Endothelial cell of umbilical vein (primary cell): ENCODE measurements at regions of chr6 and their contacts with region 1.

Region 1: DNA sequence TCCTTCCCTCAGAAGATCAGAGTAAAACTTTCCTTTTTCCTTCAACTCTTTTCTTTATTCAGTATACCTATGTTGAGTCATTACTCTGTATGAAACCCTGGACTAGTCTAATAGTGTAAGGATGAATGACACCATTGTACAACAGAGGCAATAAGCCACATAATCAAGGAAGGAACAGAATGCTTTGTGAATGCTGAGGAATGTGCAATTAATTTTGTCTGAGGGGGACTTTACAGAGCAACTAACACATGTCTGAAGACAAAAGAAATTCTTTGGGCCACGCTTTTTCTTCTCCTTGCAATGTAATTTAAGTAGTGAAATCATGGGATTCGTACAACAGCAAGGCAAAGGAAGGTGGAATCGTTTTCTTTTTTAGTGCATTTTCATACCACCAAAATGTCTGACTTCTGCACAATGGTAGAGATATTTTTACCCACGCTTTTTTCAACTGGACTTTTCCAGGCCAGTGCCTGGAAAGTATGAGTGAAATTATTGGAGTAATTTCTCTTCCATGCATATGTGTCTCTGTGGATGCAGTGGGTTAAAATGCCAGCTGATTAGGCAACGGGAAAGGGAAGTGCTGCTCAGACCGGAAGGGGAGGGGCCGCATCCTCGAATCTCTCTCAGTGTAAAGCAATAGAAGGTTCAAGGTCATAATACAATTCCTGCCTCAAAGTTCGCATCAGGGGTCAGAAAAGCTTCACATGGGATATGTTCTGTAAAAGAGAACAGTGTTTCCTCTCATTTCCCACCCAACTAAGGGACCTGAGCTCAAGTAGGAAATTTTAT is 89.9 kb upstream of the MTHFD1L start:
- DNase-seq: peak; percentile 44
- H3K4me3 ChIP-seq: no peak overlapping the region
- H3K27ac ChIP-seq: no peak overlapping the region
- H3K4me1 ChIP-seq: peaks cover 13% of the 10 kb centered on the region
- H3K27me3 ChIP-seq: no peaks in the 10 kb centered on the region
- CTCF ChIP-seq: no peak
- POLR2A ChIP-seq: no peak

Region 2: GRCh38 chr6:150761771-150762170 is 13.8 kb before region 1 on chr6:
- CTCF ChIA-PET with region 1: interaction called, 6 read pairs
- POLR2A ChIA-PET with region 1: no interaction called
- dilution Hi-C with region 1: no loop called
- intact Hi-C with region 1: loop called (anchors 2 kb)
- DNase-seq: no peak
- H3K4me3 ChIP-seq: no peak overlapping the region
- H3K27ac ChIP-seq: no peak overlapping the region
- H3K4me1 ChIP-seq: peaks cover 4% of the 10 kb centered on the region
- H3K27me3 ChIP-seq: no peaks in the 10 kb centered on the region
- CTCF ChIP-seq: no peak
- POLR2A ChIP-seq: no peak

Region 3: GRCh38 chr6:150848400-150848799 is 72.8 kb after region 1 on chr6:
- CTCF ChIA-PET with region 1: no interaction called
- POLR2A ChIA-PET with region 1: no interaction called
- dilution Hi-C with region 1: no loop called
- intact Hi-C with region 1: no loop called
- DNase-seq: no peak
- H3K4me3 ChIP-seq: no peak overlapping the region
- H3K27ac ChIP-seq: no peak overlapping the region
- H3K4me1 ChIP-seq: no peaks in the 10 kb centered on the region
- H3K27me3 ChIP-seq: no peaks in the 10 kb centered on the region
- CTCF ChIP-seq: no peak
- POLR2A ChIP-seq: no peak